Right cardiac atrium (tissue), 5 donors: ENCODE measurements at regions of chr11 and their contacts with region 1.

Region 1: GRCh38 chr11:17504330-17505107 is 27.9 kb upstream of the ABCC8 start:
- DNase-seq: peak; percentile 79 to 91 (median 89)
- ATAC-seq: peak; percentile 64 to 67
- H3K4me3 ChIP-seq: no peak overlapping the region
- H3K27ac ChIP-seq: no peak overlapping the region
- H3K4me1 ChIP-seq: peaks cover 5% of the 10 kb centered on the region
- H3K27me3 ChIP-seq: no peaks in the 10 kb centered on the region

Region 2: DNA sequence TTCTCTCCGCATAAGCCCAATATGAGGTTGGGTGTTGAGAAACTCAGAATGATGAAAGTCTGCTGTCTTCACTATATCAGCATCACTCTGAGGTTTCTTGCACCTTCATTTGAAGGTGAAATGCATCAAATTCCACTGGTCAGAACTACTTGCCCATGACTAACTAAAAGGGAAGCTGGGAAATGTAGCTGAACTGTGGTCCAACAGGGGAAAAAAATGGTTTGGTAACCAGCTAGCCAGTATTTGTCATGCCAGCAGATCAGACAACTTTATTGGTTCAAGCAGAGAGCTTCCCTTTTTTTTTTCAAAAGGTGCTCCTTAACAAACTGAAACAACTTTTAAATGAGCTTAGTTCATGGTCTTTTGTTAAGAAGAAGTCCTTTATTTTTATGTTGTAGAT is 282.6 kb before region 1 on chr11:
- intact Hi-C with region 1: loop called in 1 of 4 experiments (anchors 10 kb)
- DNase-seq: no peak
- ATAC-seq: no peak
- H3K4me3 ChIP-seq: no peak overlapping the region
- H3K27ac ChIP-seq: no peak overlapping the region
- H3K4me1 ChIP-seq: no peaks in the 10 kb centered on the region
- H3K27me3 ChIP-seq: no peaks in the 10 kb centered on the region

Region 3: DNA sequence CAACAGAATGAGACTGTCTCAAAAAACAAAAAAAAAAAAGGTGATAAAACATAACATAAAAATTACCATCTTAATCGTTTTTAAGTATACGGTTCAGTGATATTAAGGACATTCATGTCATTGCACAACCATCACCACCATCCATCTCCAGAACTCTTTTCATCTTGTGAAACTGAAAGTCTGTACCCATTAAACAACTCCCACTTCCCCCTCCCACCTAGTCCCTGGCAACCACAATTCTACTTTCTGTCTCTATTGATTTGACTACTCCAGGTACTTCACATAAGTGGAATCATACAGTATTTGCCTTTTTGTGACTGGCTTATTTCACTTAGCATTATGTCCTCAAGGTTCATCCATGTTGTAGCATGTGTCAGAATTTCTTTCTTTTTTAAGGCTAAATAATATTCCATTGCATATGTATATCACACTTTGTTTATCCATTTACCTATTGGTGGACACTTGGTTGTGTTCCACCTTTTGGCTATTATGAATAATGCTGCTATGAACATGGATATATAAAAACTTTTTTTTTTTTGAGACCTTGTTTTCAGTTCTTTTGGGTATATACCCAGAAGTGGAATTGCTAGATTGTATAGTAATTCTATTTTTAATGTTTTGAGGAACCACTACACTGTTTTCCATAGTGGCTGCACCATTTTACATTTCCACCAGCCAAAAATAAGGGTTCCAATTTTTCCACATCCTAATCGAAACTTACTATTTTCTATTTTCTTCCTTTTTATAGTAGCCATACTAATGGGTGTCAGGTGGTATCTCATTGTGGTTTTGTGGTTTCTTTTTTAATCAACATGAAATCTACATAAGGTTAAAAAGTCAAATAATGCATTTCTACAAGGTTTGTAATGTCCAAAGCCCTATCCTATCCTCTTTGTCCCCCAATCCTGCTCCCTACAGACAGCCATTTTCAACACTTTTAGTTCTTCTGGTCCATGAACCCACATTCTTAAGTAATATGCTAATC is 273.4 kb before region 1 on chr11:
- intact Hi-C with region 1: loop called in 3 of 4 experiments (anchors 10 kb)
- DNase-seq: no peak
- ATAC-seq: no peak
- H3K4me3 ChIP-seq: no peak overlapping the region
- H3K27ac ChIP-seq: no peak overlapping the region
- H3K4me1 ChIP-seq: no peaks in the 10 kb centered on the region
- H3K27me3 ChIP-seq: no peaks in the 10 kb centered on the region

Region 4: DNA sequence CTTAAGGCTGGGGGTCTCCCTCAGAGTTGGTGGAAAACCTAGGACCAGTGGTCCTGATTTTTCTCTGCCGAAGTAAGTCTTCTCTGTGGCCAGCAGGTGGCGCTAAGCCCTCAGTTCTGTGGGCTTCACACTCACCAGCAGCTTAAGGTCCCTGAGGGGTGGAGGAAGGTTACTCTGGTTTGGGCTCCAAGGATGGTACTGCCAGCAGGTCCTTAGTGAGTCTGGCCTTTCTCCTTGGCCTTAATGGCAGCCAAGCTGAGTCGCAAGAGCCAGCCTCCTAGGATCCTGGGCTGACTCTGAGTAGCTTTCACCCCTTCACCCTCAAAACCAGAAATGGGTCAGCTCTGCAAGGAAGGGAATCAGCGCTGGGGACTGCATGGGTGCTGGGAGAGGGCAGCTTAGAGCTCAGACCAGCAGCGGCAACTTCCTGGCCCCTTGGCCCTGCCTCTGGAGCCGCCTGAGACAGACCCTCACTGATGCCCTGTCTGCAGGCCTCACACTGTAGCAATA is 120.5 kb before region 1 on chr11:
- intact Hi-C with region 1: loop called (anchors 1 to 5 kb)
- DNase-seq: peak; percentile 84 to 87 (median 85)
- ATAC-seq: peak; percentile 34 to 54
- H3K4me3 ChIP-seq: no peak overlapping the region
- H3K27ac ChIP-seq: no peak overlapping the region
- H3K4me1 ChIP-seq: no peaks in the 10 kb centered on the region
- H3K27me3 ChIP-seq: no peaks in the 10 kb centered on the region

Region 5: GRCh38 chr11:17389211-17389956 is 115.1 kb before region 1 on chr11:
- intact Hi-C with region 1: loop called (anchors 1 to 5 kb)
- DNase-seq: peak; percentile 70 to 90 (median 89)
- ATAC-seq: peak; percentile 70 to 77
- H3K4me3 ChIP-seq: peak overlapping the region; percentile 78
- H3K27ac ChIP-seq: peak overlapping the region; percentile 55
- H3K4me1 ChIP-seq: no peaks in the 10 kb centered on the region
- H3K27me3 ChIP-seq: no peaks in the 10 kb centered on the region

Region 6: DNA sequence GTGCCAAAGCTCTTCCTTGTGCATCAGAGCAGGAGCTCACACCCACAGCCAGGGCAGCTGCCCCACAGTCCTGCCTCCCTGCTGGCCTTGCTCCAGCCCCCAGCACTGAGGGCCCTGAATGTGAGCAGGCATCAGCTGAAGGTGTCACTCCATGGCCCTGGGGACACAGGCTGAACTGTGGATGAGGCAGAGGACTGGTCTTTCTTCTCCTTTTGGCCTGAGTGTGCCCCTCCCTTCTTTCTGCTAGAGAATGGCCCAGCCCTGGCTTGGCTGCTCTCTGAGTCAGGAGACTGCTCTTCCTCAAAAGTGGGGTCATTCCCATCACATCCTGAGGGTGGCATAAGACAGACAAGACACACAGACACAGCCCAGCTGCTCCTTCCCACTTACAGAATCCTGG is 58.7 kb after region 1 on chr11:
- intact Hi-C with region 1: no loop called
- DNase-seq: no peak
- ATAC-seq: peak; percentile 38 to 46
- H3K4me3 ChIP-seq: no peak overlapping the region
- H3K27ac ChIP-seq: no peak overlapping the region
- H3K4me1 ChIP-seq: no peaks in the 10 kb centered on the region
- H3K27me3 ChIP-seq: no peaks in the 10 kb centered on the region